SK-N-SH (cell line): ENCODE measurements at regions of chr3 and their contacts with region 1.

Region 1: DNA sequence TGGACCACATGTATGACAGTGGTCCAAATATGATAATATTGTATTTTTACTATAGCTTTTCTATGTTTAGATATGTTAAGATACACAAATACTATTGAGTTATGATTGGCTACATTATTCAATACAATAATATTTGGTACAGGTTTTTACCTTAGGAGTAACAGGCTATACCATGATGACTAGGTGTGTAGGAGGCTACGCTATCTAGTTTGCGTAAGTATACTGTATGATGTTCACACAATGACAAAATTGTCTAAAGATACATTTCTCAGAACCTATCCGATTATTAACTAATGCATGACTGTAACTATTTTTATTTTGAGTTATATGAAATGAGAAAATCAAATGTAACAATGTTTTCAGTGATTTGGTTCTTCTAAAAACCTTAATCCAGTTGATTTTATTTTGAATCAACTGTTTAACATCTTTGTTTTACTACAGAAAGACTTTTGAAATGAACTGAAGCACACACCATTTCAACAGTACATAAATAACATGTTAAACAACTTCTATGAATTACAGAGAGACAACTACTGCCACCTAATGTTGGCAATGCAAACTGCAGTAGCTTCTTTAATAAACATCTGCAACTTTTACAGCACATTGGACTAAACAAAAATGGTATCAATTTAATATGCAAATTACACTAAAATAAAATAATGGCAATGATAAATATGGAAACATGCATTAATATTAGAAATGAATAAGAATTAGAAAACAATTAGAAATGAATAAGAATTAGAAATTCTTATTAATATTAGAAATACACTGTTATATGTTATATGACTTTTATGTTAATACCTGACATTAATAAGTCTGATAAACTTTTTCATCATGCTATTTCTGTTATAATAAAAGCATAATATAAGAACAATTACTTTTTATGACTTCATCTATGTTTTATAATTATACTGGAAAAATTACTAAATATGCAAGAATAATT is 255.7 kb downstream of the MBNL1 start:
- DNase-seq: peak; percentile 21
- H3K4me3 ChIP-seq: no peak overlapping the region; a peak in 1 of 4 replicates
- H3K27ac ChIP-seq: no peak overlapping the region
- H3K4me1 ChIP-seq: no peaks in the 10 kb centered on the region
- H3K27me3 ChIP-seq: no peaks in the 10 kb centered on the region
- CTCF ChIP-seq: peak; percentile 96
- EP300 ChIP-seq: no peak
- RAD21 ChIP-seq: peak; percentile 71

Region 2: DNA sequence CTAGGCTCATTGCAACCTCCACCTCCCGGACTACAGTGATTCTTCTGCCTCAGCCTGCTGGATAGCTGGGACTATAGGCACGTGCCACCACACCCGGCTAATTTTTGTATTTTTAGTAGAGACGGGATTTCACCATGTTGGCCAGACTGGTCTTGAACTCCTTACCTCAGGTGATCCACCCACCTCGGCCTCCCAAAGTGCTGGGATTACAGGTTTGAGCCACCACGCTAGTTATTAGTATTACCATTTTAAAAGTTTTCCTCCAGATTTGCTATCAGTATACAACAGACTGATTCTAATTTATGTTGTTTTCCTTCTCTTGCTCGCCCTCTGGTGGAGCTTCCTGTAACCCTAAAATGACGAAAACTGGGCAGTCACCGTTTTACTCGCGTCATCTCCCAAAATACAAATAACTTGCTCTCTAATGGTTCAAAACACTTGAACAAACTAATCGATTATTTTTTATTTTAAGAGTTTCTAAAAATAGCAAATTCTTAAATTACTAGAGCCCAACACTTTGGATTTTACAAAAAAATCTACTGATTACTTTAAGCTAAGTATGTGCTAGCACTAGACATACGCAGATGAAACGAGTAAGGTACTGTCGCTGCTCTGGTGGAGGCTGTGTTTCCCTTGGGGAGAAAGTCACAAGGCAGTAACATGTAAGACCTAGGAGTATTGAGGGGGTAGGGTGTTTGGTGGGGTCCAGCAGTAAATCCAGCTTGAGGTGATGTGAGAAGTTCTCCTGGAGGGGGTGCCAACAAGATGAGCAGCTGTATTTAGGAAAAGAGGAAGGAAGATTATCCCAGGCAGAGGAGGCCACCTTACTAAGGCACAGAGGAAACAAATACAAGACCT is 52.4 kb before region 1 on chr3:
- CTCF ChIA-PET with region 1: interaction called, 11 read pairs
- POLR2A ChIA-PET with region 1: no interaction called
- DNase-seq: peak; percentile 49
- H3K4me3 ChIP-seq: peak overlapping the region in 1 of 2 experiments; percentile 14; a peak in 2 of 4 replicates
- H3K27ac ChIP-seq: no peak overlapping the region; a peak in 1 of 4 replicates
- H3K4me1 ChIP-seq: peaks cover 0 to 3% of the 10 kb centered on the region in 2 experiments; a peak in 1 of 4 replicates
- H3K27me3 ChIP-seq: no peaks in the 10 kb centered on the region
- CTCF ChIP-seq: peak; percentile 80
- EP300 ChIP-seq: no peak
- RAD21 ChIP-seq: peak; percentile 71

Region 3: GRCh38 chr3:152508705-152509104 is 15.8 kb before region 1 on chr3:
- CTCF ChIA-PET with region 1: interaction called, 10 read pairs
- POLR2A ChIA-PET with region 1: no interaction called
- DNase-seq: no peak
- H3K4me3 ChIP-seq: no peak overlapping the region
- H3K27ac ChIP-seq: no peak overlapping the region
- H3K4me1 ChIP-seq: no peaks in the 10 kb centered on the region
- H3K27me3 ChIP-seq: no peaks in the 10 kb centered on the region
- CTCF ChIP-seq: no peak; the same call in 1 of the 2 replicates
- EP300 ChIP-seq: no peak
- RAD21 ChIP-seq: peak; percentile 52

Region 4: DNA sequence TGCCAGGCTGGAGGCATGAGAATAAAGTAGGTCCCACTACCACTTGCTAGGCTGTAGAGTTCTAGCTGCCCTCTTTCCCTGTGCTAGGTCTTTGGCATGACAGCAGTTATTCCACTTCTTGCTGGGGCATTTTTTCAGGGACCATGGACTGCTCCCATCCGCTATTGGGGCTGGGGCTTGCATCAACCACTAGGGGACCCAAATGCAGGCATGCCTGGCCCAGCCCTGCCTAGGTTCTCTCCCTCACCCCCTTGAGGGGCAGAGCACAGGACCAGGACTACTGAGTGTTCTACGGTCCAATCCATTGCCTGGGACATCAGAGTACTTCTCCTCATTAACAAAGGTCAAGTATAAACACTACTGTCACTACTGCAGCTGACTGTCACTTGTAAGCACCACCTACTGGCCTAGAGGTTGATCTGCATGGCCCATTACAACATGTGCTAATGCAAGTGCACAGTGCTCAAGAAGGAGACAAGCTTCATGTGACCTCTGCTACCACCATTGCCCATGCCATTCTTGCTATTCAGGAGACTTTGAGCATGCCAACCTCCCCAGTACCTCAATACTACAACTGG is 14.8 kb after region 1 on chr3:
- CTCF ChIA-PET with region 1: interaction called, 13 read pairs
- POLR2A ChIA-PET with region 1: no interaction called
- DNase-seq: no peak
- H3K4me3 ChIP-seq: no peak overlapping the region
- H3K27ac ChIP-seq: no peak overlapping the region
- H3K4me1 ChIP-seq: no peaks in the 10 kb centered on the region
- H3K27me3 ChIP-seq: 0 out of 2 replicates have a peak, but pooled peaks cover 8% of the 10 kb centered on the region
- CTCF ChIP-seq: peak; percentile 24; the same call in 1 of the 2 replicates
- EP300 ChIP-seq: no peak
- RAD21 ChIP-seq: no peak

Region 5: GRCh38 chr3:152621006-152621868 is 96.8 kb after region 1 on chr3:
- CTCF ChIA-PET with region 1: no interaction called
- POLR2A ChIA-PET with region 1: no interaction called
- DNase-seq: no peak
- H3K4me3 ChIP-seq: no peak overlapping the region
- H3K27ac ChIP-seq: no peak overlapping the region
- H3K4me1 ChIP-seq: no peaks in the 10 kb centered on the region; a peak in 1 of 4 replicates
- H3K27me3 ChIP-seq: no peaks in the 10 kb centered on the region
- CTCF ChIP-seq: no peak
- EP300 ChIP-seq: no peak
- RAD21 ChIP-seq: no peak